Right ventricle myocardium superior (tissue), 1 donor: ENCODE measurements at regions of chr20 and their contacts with region 1.

Region 1: GRCh38 chr20:58131551-58132142 is 96.8 kb downstream of the ANKRD60 start:
- DNase-seq: no peak
- ATAC-seq: no peak

Region 2: DNA sequence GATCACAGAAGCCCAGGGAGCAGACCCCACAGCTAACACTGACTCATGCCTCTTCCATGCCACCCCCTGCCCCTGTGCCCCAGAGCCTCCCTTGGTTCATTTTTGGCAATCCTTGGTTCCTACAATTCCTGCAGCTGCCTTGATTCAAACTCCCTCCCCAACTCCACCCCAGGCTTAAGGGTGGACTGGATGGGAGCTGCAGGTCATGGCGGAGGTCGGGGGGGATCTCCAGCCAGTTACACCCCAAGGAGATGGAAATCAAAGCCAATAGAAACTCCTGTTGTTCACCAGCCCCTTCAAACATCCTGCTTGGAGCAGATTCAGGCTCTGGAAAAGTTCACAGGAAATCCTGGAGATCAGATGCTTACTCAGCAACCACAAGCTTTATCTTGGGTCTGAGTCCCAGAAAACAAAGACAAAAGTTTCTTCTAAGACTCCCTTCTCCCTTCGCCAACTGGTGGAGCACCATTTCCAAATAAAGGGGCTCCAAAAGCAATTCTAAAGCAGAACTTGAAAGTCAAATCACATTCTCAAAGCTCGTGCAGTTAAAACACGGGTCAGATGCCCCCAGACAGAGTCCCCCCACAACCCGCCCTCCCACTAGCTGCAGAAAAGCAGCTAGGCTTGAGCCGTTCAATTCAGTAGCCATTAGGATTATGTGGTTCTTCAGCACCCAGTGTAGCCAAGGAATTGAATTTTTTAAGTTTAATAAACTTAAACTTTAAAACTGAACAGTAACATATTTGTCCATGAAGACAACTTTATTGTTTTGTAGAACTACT is 52.7 kb before region 1 on chr20:
- intact Hi-C with region 1: loop called (anchors 10 kb)
- DNase-seq: no peak
- ATAC-seq: no peak

Region 3: GRCh38 chr20:58094160-58094559 is 37.5 kb before region 1 on chr20:
- intact Hi-C with region 1: loop called (anchors 5 kb)
- DNase-seq: no peak
- ATAC-seq: no peak

Region 4: GRCh38 chr20:58209652-58210397 is 78.2 kb after region 1 on chr20:
- intact Hi-C with region 1: no loop called
- DNase-seq: peak; percentile 92
- ATAC-seq: peak; percentile 96